ENCODE measurements at regions of chr1 and their contacts with region 1.

Region 1: DNA sequence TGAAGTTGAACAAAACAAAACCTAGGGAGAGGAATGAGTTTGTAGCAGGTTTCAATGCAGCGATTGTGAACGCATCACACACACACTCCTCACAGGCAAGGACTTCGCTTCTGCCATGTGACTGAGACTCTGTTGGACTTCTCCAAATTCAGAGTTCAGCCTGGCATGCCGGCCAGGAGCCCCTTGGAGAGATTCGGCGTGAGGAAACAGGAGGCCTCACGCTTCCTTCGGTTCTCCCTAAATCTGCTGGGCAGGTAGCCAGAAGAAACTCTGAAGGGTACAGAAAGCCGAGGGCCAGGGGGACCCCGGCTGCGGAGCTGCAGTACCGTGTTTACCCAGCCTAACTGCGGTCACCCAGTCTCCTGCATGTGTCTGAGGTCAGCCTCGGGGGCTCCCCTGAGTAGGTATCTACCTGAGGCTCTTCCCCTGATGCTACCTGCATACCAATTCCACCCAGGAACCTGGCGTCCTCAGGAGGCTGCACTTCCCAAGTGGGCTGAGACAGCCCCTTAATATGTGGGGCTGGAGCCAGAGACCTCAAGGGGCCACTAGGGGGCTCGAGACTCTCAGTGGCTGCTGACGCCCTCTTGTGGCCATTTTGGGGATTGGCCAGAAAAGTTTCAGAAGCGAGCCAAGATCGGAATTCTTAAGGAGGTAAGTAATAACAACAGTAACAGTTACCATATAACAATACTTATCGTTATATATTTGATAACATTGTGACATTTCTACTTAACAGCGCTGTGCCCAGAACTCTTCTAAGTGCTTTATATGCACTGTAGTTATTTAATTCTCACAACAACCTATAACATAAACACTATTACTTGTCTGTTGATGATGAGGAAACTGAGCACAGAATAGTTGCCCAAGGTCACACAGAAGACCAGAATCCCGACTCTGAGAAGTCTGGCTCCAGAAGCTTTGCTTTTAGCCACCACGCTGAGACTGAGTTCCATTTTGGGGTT is 2.7 kb upstream of the ANXA9 start:
- DNase-seq: peak; percentile 68 to 93 (median 84)
- ATAC-seq: peak; percentile 81
- H3K4me3 ChIP-seq: peak overlapping the region; percentile 39
- H3K4me3 Mint-ChIP-seq: peak overlapping the region in 9 of 10 donors; percentile 39 to 73 (median 61)
- H3K27ac ChIP-seq: peak overlapping the region; percentile 67
- H3K27ac Mint-ChIP-seq: peak overlapping the region; percentile 9 to 83 (median 62)
- H3K4me1 ChIP-seq: peaks cover 24 to 34% of the 10 kb centered on the region in 2 donors
- H3K4me1 Mint-ChIP-seq: peaks cover 14 to 44% (median 37%) of the 10 kb centered on the region in 7 donors
- H3K27me3 ChIP-seq: no peaks in the 10 kb centered on the region
- H3K27me3 Mint-ChIP-seq: no peaks in the 10 kb centered on the region

Region 2: GRCh38 chr1:150259758-150260669 is 719.4 kb before region 1 on chr1:
- CTCF ChIA-PET with region 1: no interaction called
- POLR2A ChIA-PET with region 1: no interaction called
- intact Hi-C with region 1: loop called in 1 of 2 experiments (anchors 1 kb)
- DNase-seq: no peak
- ATAC-seq: no peak
- H3K4me3 ChIP-seq: no peak overlapping the region
- H3K4me3 Mint-ChIP-seq: peak overlapping the region in 1 of 10 donors; percentile 32
- H3K27ac ChIP-seq: no peak overlapping the region
- H3K27ac Mint-ChIP-seq: no peak overlapping the region
- H3K4me1 ChIP-seq: peaks cover 6 to 8% of the 10 kb centered on the region in 2 donors
- H3K4me1 Mint-ChIP-seq: peaks cover 6 to 23% (median 15%) of the 10 kb centered on the region in 7 donors
- H3K27me3 ChIP-seq: peaks cover 0 to 10% of the 10 kb centered on the region in 2 donors
- H3K27me3 Mint-ChIP-seq: peaks cover 13 to 49% (median 26%) of the 10 kb centered on the region in 5 donors

Region 3: DNA sequence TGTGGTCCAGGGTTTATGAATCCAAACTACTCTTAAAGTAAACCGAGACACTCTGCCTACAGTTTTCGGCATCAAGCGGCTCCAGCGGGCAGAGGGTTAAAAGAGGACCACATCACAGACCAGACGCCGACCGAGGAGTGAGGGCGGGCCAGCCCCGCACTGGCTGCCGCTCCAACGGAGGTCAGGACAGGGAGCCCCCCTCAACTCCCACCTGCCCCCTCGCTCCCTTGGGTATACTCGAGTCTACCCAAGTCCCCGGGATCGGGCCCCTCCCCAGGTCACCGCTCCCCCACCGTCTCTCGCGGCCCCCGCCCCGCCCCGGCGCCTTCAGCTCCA is 103.3 kb before region 1 on chr1:
- CTCF ChIA-PET with region 1: interaction called, 4 read pairs
- POLR2A ChIA-PET with region 1: no interaction called
- intact Hi-C with region 1: loop called in 1 of 2 experiments (anchors 2 kb)
- DNase-seq: no peak
- ATAC-seq: peak; percentile 50
- H3K4me3 ChIP-seq: peak overlapping the region; percentile 68
- H3K4me3 Mint-ChIP-seq: peak overlapping the region; percentile 87 to 96 (median 95)
- H3K27ac ChIP-seq: peak overlapping the region; percentile 83
- H3K27ac Mint-ChIP-seq: peak overlapping the region; percentile 89 to 97 (median 94)
- H3K4me1 ChIP-seq: peaks cover 0 to 19% of the 10 kb centered on the region in 2 donors
- H3K4me1 Mint-ChIP-seq: peaks cover 13 to 45% (median 37%) of the 10 kb centered on the region in 7 donors
- H3K27me3 ChIP-seq: no peaks in the 10 kb centered on the region
- H3K27me3 Mint-ChIP-seq: no peaks in the 10 kb centered on the region

Region 4: GRCh38 chr1:150961799-150962198 is 17.6 kb before region 1 on chr1:
- CTCF ChIA-PET with region 1: interaction called, 4 read pairs
- POLR2A ChIA-PET with region 1: interaction called, 3 read pairs
- intact Hi-C with region 1: loop called in 1 of 2 experiments (anchors 1 kb)
- DNase-seq: no peak
- ATAC-seq: no peak
- H3K4me3 ChIP-seq: no peak overlapping the region
- H3K4me3 Mint-ChIP-seq: no peak overlapping the region
- H3K27ac ChIP-seq: no peak overlapping the region
- H3K27ac Mint-ChIP-seq: peak overlapping the region in 4 of 9 donors; percentile 31 to 68 (median 42)
- H3K4me1 ChIP-seq: no peaks in the 10 kb centered on the region
- H3K4me1 Mint-ChIP-seq: peaks cover 0 to 12% (median 0%) of the 10 kb centered on the region in 7 donors
- H3K27me3 ChIP-seq: no peaks in the 10 kb centered on the region
- H3K27me3 Mint-ChIP-seq: no peaks in the 10 kb centered on the region

Region 5: GRCh38 chr1:151001602-151002001 is 22.2 kb after region 1 on chr1:
- CTCF ChIA-PET with region 1: interaction called, 56 read pairs
- POLR2A ChIA-PET with region 1: interaction called, 31 read pairs
- intact Hi-C with region 1: loop called (anchors 1 kb)
- DNase-seq: no peak
- ATAC-seq: no peak
- H3K4me3 ChIP-seq: no peak overlapping the region
- H3K4me3 Mint-ChIP-seq: peak overlapping the region; percentile 40 to 100 (median 89)
- H3K27ac ChIP-seq: peak overlapping the region; percentile 77
- H3K27ac Mint-ChIP-seq: peak overlapping the region in 8 of 9 donors; percentile 92 to 97 (median 96)
- H3K4me1 ChIP-seq: peaks cover 11 to 39% of the 10 kb centered on the region in 2 donors
- H3K4me1 Mint-ChIP-seq: peaks cover 33 to 62% (median 59%) of the 10 kb centered on the region in 7 donors
- H3K27me3 ChIP-seq: no peaks in the 10 kb centered on the region
- H3K27me3 Mint-ChIP-seq: no peaks in the 10 kb centered on the region

Region 6: DNA sequence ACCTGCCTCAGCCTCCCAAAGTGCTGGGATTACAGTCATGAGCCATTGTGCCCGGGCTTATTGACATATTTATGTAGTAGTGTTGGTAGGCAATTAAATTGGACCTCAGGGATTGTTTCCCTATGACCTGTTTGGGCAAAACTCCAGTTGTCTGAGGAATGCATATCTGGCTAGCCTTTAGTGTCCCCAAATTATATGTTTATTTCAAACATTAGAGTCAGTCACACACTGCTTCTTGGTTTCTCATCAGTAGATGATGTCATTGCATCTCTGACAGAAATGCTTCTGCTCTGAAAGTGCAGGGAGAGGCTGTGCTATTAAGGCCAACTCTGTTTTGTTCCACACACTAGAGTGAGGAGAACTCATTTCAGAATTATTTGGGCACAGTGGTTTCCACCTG is 231.5 kb after region 1 on chr1:
- CTCF ChIA-PET with region 1: no interaction called
- POLR2A ChIA-PET with region 1: no interaction called
- intact Hi-C with region 1: no loop called
- DNase-seq: no peak
- ATAC-seq: no peak
- H3K4me3 ChIP-seq: no peak overlapping the region
- H3K4me3 Mint-ChIP-seq: peak overlapping the region in 5 of 10 donors; percentile 11 to 66 (median 45)
- H3K27ac ChIP-seq: peak overlapping the region; percentile 13
- H3K27ac Mint-ChIP-seq: peak overlapping the region in 4 of 9 donors; percentile 4 to 91 (median 57)
- H3K4me1 ChIP-seq: peaks cover 5 to 13% of the 10 kb centered on the region in 2 donors
- H3K4me1 Mint-ChIP-seq: peaks cover 22 to 43% (median 36%) of the 10 kb centered on the region in 7 donors
- H3K27me3 ChIP-seq: no peaks in the 10 kb centered on the region
- H3K27me3 Mint-ChIP-seq: no peaks in the 10 kb centered on the region